PC-9 (cell line): ENCODE measurements at regions of chr5 and their contacts with region 1.

Region 1: GRCh38 chr5:27315541-27316282 is 277.3 kb upstream of the CDH9 start:
- DNase-seq: peak in 1 of 2 experiments; percentile 26
- H3K4me3 ChIP-seq: no peak overlapping the region
- H3K27ac ChIP-seq: no peak overlapping the region
- H3K4me1 ChIP-seq: no peaks in the 10 kb centered on the region
- H3K27me3 ChIP-seq: no peaks in the 10 kb centered on the region
- CTCF ChIP-seq: no peak

Region 2: DNA sequence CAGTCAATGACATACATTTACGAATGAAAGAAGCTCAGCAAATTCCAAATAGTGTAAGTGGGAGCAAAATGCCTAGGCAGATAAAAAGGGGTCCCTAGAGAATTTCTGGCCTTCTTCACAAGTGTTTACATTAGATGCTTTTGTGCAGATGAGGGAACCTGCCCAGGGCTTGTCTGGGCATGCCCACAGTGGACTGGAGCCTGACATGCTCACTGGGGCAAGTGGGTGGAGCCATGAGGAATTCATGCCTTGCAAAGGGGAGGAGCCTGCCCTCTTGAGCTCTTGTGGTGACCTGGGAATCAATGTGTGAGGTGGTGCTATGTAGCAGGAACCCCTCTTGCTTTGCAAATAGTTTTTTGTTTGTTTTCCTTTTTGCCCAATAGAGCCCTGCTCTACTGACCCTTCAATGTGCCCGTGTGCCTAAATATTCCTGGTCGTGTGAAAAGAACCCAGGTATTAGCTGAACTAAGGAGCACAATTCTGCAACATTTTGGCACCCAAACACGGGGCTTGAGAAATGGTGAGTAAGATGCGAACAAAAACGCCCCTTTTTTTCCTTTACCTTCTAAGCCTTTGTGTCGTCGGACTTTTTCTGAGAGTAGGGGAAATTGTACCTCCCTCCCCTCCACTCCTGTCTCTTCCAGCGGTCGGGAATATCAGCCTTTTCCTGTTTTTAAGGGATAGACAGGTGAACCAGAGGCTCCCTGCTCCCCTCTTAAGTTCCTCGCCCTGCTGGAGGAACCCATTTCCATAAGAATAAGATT is 156.5 kb after region 1 on chr5:
- CTCF ChIA-PET with region 1: no interaction called
- POLR2A ChIA-PET with region 1: no interaction called
- intact Hi-C with region 1: loop called (anchors 5 kb)
- DNase-seq: peak; percentile 41 to 89
- H3K4me3 ChIP-seq: no peak overlapping the region
- H3K27ac ChIP-seq: no peak overlapping the region
- H3K4me1 ChIP-seq: no peaks in the 10 kb centered on the region
- H3K27me3 ChIP-seq: no peaks in the 10 kb centered on the region
- CTCF ChIP-seq: no peak

Region 3: DNA sequence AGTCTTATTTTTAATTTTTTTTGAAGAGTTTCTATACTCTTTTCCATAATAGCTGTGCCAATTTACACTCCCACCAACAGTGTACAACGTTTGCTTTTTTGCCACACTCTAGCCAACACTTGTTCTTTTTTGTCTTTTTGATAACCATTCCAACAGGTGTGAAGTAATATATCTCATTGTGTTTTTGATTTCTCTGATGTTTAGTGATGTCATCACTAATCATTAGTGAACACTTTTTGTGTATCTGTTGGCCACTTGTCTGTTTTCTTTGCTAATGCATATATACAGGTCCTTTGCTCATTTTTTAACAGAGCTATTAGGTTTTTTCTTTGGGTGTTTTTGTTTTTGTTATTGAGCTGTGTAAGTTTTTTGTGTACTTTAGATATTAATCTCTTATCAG is 383.1 kb after region 1 on chr5:
- CTCF ChIA-PET with region 1: no interaction called
- POLR2A ChIA-PET with region 1: no interaction called
- intact Hi-C with region 1: no loop called
- DNase-seq: no peak
- H3K4me3 ChIP-seq: no peak overlapping the region
- H3K27ac ChIP-seq: no peak overlapping the region
- H3K4me1 ChIP-seq: no peaks in the 10 kb centered on the region
- H3K27me3 ChIP-seq: no peaks in the 10 kb centered on the region
- CTCF ChIP-seq: no peak